Prostate gland (tissue), 2 donors: ENCODE measurements at regions of chr17 and their contacts with region 1.

Region 1: DNA sequence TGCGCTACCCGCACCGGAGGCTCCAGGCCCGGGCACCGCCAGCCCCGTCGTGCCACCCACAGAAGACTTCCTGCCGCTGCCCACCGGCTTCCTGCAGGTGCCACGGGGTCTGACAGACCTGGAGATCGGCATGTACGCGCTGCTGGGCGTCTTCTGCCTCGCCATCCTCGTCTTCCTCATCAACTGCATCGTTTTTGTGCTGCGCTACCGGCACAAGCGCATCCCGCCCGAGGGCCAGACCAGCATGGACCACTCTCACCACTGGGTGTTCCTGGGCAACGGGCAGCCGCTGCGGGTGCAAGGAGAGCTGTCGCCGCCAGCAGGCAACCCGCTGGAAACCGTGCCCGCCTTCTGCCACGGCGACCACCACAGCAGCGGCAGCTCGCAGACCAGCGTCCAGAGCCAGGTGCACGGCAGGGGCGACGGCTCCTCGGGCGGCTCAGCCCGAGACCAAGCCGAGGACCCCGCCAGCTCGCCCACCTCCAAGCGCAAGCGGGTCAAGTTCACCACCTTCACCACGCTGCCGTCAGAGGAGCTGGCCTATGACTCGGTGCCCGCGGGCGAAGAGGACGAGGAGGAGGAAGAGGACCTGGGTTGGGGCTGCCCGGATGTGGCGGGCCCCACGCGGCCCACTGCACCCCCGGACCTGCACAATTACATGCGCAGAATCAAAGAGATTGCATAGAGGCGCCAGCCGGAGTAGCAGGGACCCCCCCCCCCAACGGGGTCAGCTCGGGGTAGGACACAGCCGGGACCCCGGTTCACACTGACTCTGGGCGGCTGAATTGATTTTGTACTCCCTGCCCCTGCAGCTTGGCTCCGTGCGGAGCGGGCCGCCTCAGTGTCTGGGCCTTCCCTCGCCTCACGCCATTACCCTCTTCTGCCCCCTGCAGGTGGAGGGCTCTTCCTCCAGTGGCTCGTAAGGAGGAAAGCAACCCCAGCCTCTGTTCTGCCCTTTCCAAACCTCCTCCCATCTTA is 58.5 kb downstream of the TMEM132E start:
- DNase-seq: peak; percentile 66
- H3K4me3 ChIP-seq: peak overlapping the region; percentile 21 to 33
- H3K27ac ChIP-seq: no peak overlapping the region
- H3K4me1 ChIP-seq: no peaks in the 10 kb centered on the region
- H3K27me3 ChIP-seq: peaks cover 6% of the 10 kb centered on the region
- CTCF ChIP-seq: peak; percentile 60 to 80 (median 72)
- POLR2A ChIP-seq: no peak

Region 2: GRCh38 chr17:34420254-34420766 is 217.5 kb before region 1 on chr17:
- intact Hi-C with region 1: loop called (anchors 5 kb)
- DNase-seq: peak; percentile 57
- H3K4me3 ChIP-seq: no peak overlapping the region
- H3K27ac ChIP-seq: no peak overlapping the region
- H3K4me1 ChIP-seq: no peaks in the 10 kb centered on the region
- H3K27me3 ChIP-seq: peaks cover 29% of the 10 kb centered on the region
- CTCF ChIP-seq: peak; percentile 77 to 91 (median 90)
- POLR2A ChIP-seq: no peak

Region 3: DNA sequence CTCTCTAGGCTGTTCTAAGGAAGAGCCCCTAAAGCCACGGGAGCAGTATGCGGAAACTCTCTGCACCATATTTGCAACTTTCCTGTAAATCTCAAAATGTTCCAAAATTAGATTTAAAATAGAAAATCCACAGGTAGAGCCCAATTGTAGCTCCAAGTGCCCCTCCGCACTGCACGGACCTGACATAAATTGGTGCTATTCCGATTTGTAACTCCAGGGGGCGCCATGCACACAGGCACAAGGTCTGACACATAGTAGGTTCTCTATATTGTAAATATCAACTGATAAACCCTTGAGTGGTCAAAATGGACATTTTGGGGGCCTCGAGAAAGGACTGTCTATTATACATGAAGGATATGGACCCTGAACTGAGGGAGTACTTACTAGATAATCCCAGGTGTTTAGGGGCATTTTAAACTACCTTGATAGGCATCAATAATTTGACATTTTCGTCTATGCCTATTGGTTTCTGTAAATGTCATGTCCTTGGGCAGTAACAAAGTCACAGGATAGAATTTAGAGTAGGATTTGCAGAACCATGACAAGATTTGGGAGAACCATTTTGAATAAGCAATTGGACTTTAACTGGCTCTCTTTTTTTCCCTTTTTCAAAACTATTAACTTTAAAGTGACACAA is 95.0 kb before region 1 on chr17:
- intact Hi-C with region 1: loop called (anchors 5 kb)
- DNase-seq: peak; percentile 13
- H3K4me3 ChIP-seq: no peak overlapping the region
- H3K27ac ChIP-seq: no peak overlapping the region
- H3K4me1 ChIP-seq: no peaks in the 10 kb centered on the region
- H3K27me3 ChIP-seq: peaks cover 3% of the 10 kb centered on the region
- CTCF ChIP-seq: peak; percentile 62 to 79 (median 72)
- POLR2A ChIP-seq: no peak